Right ventricle myocardium inferior (tissue), 1 donor: ENCODE measurements at regions of chr2 and their contacts with region 1.

Region 1: DNA sequence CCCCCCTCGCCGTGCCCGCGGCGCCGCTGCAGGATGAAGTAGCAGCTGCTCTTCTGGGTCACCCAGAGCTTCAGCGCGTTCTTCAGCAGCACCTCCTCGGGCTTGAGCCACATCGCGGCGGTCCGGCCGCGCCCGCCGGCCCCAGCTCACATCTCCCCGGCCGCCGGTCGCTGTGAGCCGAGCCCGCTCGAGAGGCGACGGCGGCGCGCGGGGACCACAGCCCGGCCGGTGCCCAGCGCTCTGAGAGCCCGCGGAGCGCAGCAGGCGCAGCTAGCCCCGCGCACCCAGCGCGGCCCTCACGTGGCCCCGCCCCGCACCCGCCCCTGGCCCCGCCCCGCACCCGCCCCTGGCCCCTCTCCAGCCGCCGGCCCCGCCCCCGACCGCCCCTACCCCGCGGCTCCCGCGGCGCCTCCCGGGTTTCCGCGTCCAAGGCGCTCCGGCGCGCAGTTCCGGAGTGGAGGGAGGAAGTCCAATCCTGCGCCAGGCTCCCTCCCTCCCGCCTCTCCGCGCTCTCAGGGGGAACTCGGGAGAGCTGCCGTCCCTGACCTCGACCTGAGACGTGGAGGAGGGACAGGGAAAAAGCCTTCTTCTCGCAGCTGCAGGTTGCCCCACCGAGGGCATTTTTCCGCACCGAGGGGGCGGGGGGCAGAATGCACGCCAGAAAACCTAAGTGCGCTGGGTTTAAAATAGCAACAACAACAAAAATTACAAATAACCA is at the start of gene TBC1D8:
- DNase-seq: peak; percentile 95
- ATAC-seq: peak; percentile 93
- total RNA-seq, gene TBC1D8: 37.9 TPM

Region 2: GRCh38 chr2:100730346-100730745 is 421.0 kb before region 1 on chr2:
- intact Hi-C with region 1: no loop called
- DNase-seq: no peak
- ATAC-seq: peak; percentile 69

Region 3: DNA sequence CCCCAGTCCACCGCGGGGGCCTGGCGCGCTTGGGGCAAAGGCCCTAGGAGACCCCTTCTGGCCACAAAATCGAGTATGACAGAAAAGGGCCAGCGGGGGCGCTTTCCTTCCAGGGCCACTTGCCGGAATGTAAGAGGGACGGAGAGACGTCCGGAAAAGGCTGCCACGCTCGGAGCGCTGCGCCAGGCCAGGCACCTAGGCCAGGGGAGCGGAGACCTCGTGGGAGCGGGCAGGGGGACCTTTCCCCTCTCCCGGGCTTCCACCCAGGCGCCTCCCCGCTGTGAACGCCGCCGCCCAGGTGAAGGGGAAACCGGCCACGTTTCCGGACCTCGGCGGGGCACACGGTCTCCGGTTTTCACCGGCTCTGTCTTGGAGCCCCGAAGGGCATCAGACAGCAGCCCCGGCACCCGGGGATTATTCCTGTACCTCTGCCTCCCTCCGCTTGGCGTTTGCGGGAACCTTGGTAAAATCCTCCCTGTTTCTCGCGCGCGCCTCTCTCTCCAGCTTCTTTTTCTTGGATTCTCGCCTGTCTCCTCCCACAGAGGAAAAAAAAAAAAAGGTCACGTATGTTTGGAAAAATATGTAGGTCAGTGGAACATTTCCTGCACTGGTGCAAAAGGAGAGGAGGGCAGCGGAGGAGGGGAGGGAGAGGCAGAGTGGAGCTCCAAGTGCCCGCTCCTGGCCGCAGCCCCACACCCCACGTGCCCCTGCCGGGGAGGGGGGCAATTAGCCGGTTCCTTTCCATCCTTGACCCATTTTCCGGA is 332.5 kb before region 1 on chr2:
- intact Hi-C with region 1: loop called (anchors 5 kb)
- DNase-seq: no peak
- ATAC-seq: peak; percentile 66

Region 4: DNA sequence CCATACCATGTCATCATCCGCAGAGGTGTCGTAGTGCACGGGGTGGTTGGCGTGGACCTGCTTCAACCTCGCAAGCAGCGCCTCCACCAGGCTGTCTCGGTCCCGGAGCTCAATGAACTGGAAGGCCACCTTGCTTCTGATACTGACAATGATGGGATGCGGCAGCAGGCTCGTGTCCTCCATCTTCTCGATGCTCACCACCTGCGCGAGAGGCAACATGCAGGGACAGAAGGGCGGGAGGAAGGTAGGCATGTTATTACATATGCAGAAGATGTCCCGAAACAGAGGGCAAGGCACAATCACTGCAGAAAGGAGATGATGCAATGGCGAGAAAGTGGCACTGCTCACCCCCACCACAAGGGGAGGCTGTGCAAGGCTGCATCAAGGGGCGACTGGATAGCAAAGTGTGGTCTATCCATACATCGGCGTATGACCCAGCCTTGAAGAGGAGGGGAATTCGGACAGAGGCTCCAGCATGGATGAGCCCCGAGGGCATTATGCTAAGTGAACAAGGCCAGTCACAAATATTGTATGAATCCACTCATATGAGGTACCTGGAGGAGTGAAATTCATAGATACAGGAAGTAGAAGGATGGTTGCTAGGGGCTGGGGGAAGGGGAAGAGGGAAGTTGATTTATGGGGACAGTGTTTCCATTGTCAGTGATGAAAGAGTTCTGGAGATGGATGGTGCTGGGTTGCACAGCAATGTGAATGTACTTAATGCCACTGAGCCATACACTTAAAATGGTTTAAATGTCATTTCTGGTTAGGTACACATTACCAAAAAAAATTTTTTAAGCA is 112.6 kb before region 1 on chr2:
- intact Hi-C with region 1: loop called (anchors 2 kb)
- DNase-seq: no peak
- ATAC-seq: no peak

Region 5: DNA sequence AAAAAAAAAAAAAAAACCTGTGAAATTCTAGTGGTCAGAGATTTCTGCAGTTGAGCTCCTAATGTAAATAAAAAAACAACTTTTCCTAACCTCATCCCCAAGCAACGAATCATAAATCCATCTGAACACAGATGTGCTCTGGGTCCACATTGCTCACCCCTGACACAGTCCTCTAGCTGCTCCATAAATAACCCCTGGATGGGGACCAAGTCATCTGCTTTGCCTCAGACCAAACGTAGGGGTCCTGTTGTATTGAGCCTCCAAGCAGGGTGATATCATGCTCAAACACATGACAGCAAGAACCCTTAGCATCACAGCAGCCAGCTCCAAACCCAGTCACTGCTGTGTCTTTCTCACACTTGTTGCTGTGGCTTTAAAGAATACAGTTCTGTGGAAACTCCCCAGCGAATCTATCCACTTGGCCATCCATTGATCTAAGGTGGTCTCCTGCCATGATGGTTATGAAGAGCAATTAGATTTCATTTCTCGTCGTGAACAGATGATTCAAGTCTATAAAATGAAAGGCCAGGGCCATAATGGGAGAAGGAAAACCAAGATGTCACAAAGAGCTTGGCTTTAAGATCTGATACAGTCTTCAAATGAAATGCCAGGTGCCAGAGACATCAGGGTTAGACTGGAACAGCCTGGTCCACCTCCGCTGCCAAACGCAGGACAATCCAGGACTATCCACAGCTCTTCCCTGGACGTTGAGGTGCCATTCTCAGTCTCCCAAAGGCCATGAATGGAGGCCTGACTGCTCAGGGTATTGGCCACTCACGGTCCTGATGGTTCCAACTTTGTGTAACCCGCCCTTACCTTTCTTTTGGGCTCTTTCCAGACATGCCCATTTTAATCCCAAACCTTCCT is 39.1 kb before region 1 on chr2:
- intact Hi-C with region 1: loop called (anchors 2 kb)
- DNase-seq: no peak
- ATAC-seq: peak; percentile 86

Region 6: DNA sequence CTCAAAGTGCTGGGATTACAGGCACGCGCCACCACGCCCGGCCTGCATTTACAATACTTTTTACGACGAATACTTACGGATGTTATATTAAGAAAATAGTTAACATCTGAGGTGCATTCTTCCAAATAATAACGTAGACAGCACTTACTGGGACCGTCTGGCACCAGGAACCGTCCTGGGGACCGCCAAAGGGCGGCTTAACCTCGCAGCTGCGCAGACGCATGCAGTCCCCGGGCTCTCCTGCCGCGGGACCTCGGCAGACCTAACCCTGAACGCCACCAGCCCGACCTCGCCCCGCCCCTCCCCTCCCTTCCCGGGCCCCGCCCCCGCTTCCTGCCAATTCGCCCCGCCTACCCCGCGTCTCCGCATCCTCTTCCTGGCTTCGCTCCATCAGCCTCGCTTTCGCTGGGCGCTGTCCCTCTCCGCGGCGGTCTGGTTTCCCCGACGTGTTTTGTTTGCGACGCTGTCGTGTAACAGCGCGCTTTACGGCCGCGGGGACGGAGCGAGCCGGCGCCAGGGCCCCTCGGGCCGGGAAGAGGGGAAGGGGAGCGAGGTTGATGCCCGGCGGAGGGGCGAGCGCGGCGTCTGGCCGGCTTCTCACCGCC is 101.2 kb after region 1 on chr2 and contains the start of gene CNOT11:
- intact Hi-C with region 1: loop called (anchors 2 kb)
- DNase-seq: peak; percentile 99
- ATAC-seq: peak; percentile 96
- total RNA-seq, gene CNOT11: 39.0 TPM

Region 7: DNA sequence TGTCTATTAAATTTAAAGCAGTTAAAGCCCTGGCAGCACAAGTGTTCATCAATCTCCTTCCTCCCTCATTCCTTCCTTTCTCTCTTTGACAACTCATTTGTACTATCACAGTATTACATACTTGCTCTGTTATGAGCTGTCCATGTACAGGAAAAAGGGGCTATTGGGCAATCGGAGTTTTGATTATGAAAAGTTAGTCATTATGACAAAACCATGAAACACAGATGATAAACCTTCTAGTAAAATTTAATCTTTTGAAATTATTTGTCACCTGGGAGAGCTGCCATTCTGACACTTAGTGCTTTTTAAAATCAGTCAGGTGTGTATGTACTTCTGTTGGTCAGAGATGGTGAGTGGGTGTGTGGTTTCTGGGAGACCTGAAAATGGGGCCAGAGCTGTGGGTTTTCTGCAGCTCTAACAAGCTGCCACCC is 585.6 kb after region 1 on chr2:
- intact Hi-C with region 1: no loop called
- DNase-seq: no peak
- ATAC-seq: peak; percentile 41